CD8-positive, alpha-beta memory T cell (primary cell): ENCODE measurements at regions of chr19 and their contacts with region 1.

Region 1: GRCh38 chr19:45902651-45903625 is 525 bp upstream of the MYPOP start:
- DNase-seq: peak; percentile 99 to 100 (median 99)
- H3K4me3 ChIP-seq: peak overlapping the region; percentile 74
- H3K4me3 Mint-ChIP-seq: peak overlapping the region; percentile 94 to 100 (median 97)
- H3K27ac ChIP-seq: peak overlapping the region; percentile 68
- H3K27ac Mint-ChIP-seq: peak overlapping the region; percentile 82 to 96 (median 89)
- H3K4me1 ChIP-seq: peaks cover 16% of the 10 kb centered on the region
- H3K4me1 Mint-ChIP-seq: peaks cover 17 to 25% (median 19%) of the 10 kb centered on the region in 3 donors
- H3K27me3 ChIP-seq: no peaks in the 10 kb centered on the region
- H3K27me3 Mint-ChIP-seq: peaks cover 0 to 5% of the 10 kb centered on the region in 2 donors

Region 2: DNA sequence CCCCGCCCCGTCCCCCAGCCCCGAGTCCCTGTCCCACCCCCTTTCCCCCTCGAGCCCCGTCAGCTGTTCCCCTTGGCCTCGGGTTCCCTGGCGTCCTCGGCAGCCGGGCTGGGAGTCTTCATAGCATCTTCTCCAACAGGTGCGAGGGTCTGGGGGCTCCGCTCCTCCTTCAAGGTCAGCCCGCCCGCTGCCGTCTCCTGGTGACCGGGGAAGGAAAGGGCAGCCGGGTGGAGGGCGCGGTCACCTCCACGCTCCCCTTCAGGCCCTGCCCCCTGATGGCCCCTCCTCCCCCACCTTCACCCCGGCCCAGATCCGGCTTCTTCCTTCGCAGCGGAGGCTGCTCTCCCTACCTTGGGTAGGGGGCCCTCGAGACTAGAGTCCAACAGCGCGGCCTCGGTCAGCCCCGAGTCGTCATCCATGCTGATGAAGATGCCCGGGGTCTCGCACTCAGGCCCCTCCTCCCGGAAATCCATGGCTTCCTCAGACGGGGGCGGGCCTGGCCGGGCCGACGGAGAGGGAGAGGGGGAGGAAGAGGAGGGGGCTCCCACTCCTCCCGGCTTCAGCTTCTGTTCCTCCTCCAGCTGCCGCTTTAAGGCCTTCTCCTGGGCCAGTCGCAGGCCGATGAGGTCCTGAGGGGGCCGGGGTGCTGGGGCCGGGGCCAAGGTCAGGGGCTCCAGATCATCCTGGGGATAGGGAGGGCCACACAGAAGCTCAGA is 87.3 kb before region 1 on chr19:
- CTCF ChIA-PET with region 1: no interaction called
- POLR2A ChIA-PET with region 1: no interaction called
- DNase-seq: no peak
- H3K4me3 ChIP-seq: no peak overlapping the region
- H3K4me3 Mint-ChIP-seq: peak overlapping the region in 1 of 7 donors; percentile 19
- H3K27ac ChIP-seq: no peak overlapping the region
- H3K27ac Mint-ChIP-seq: no peak overlapping the region
- H3K4me1 ChIP-seq: peaks cover 4% of the 10 kb centered on the region
- H3K4me1 Mint-ChIP-seq: peaks cover 3 to 5% (median 3%) of the 10 kb centered on the region in 3 donors
- H3K27me3 ChIP-seq: no peaks in the 10 kb centered on the region
- H3K27me3 Mint-ChIP-seq: peaks cover 0 to 5% of the 10 kb centered on the region in 2 donors

Region 3: GRCh38 chr19:45862564-45863334 is 40.2 kb before region 1 on chr19 and contains the start of gene SYMPK:
- CTCF ChIA-PET with region 1: interaction called, 20 read pairs
- POLR2A ChIA-PET with region 1: interaction called, 11 read pairs
- DNase-seq: peak; percentile 98 to 99 (median 98)
- H3K4me3 ChIP-seq: peak within 1 kb of the TSS; percentile 88
- H3K4me3 Mint-ChIP-seq: peak within 1 kb of the TSS; percentile 88 to 96 (median 92)
- H3K27ac ChIP-seq: peak within 1 kb of the TSS; percentile 82
- H3K27ac Mint-ChIP-seq: peak within 1 kb of the TSS; percentile 84 to 99 (median 93)
- H3K4me1 ChIP-seq: peaks cover 16% of the 10 kb centered on the region
- H3K4me1 Mint-ChIP-seq: peaks cover 27 to 41% (median 28%) of the 10 kb centered on the region in 3 donors
- H3K27me3 ChIP-seq: peaks cover 4% of the 10 kb centered on the region
- H3K27me3 Mint-ChIP-seq: peaks cover 12 to 18% of the 10 kb centered on the region in 2 donors
- total RNA-seq, gene SYMPK: 116 to 119 TPM

Region 4: DNA sequence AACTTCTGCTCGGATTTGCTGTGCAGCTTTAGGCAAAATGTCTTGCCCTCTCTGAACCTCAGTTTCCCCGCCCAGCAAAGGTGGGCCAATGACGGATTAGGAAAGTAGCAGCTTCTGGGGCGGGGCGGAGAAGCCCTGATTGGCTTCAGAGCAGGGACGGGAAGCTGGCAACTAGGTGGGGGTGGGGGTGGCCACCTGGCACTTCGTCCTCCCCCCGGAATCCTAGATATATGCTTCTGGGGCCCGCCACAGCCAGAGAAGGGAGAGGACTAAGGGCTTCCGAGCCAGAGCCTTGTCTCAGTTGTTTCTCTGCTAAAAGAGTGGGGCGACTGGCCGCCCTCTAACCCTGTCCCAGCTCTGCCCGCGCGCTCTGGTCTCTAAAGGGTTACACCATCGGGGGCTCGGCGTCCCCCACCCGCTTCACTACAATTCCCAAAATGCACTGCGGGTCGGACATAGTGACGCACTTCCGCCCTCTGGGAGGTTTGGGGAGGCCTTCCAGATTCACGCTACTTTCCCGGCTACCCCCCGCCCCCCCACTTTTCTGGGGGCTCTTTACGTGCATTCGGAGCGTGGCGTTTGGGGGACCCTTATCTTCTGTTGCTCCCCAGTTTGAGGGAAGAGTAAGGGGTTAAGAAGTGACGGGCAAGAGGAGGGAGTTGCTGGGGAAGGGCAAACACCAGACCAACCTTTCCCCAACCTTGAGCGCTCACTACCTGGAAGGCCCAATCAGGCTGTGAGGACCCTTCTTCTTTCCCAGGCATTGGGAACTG is 16.3 kb before region 1 on chr19:
- CTCF ChIA-PET with region 1: interaction called, 16 read pairs
- POLR2A ChIA-PET with region 1: interaction called, 19 read pairs
- DNase-seq: peak; percentile 81 to 92 (median 90)
- H3K4me3 ChIP-seq: peak overlapping the region; percentile 92
- H3K4me3 Mint-ChIP-seq: peak overlapping the region; percentile 92 to 99 (median 96)
- H3K27ac ChIP-seq: peak overlapping the region; percentile 83
- H3K27ac Mint-ChIP-seq: peak overlapping the region; percentile 92 to 99 (median 99)
- H3K4me1 ChIP-seq: peaks cover 34% of the 10 kb centered on the region
- H3K4me1 Mint-ChIP-seq: peaks cover 16 to 36% (median 22%) of the 10 kb centered on the region in 3 donors
- H3K27me3 ChIP-seq: no peaks in the 10 kb centered on the region
- H3K27me3 Mint-ChIP-seq: peaks cover 0 to 3% of the 10 kb centered on the region in 2 donors

Region 5: GRCh38 chr19:45931055-45931454 is 28.1 kb after region 1 on chr19:
- CTCF ChIA-PET with region 1: no interaction called
- POLR2A ChIA-PET with region 1: no interaction called
- DNase-seq: no peak
- H3K4me3 ChIP-seq: no peak overlapping the region
- H3K4me3 Mint-ChIP-seq: peak overlapping the region in 1 of 7 donors; percentile 10
- H3K27ac ChIP-seq: no peak overlapping the region
- H3K27ac Mint-ChIP-seq: peak overlapping the region in 1 of 8 donors; percentile 49
- H3K4me1 ChIP-seq: peaks cover 9% of the 10 kb centered on the region
- H3K4me1 Mint-ChIP-seq: peaks cover 5 to 11% (median 10%) of the 10 kb centered on the region in 3 donors
- H3K27me3 ChIP-seq: peaks cover 9% of the 10 kb centered on the region
- H3K27me3 Mint-ChIP-seq: peaks cover 12 to 39% of the 10 kb centered on the region in 2 donors

Region 6: DNA sequence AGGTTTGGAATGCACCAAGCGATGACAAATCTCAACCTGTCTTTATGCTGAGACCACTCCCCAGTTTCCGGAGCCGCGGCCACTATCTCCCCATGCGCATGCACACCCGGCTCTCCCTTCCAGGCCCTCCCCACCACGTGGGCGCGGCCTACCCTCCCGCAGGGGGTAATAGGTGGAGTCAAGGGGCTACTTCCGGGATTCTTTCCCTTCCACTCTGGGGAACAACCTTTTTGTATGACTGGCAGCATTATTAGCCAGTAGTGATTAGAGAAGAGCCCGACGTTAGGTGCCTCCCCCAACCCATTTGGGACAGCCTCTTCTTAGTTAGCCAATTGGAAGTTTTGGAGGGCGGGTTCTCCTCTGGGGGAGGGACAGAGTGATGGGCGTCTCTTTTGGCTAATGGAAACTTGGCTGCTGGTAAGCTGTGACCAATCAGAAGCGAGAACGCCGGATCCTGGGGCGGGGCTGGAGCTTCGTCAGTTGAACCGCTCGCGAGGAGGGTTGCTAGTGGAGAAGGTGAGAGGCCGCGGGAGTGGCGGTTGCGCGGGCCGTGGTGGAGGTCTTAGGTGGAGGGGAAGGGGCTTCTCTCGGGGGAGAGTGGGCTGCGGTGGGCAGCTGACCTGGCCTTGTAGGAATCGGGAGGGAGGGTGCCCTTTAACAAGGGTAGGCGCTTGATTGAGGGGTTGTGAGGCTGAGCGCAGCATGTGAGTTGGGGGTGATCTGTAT is 92.2 kb after region 1 on chr19 and contains the start of gene CCDC61:
- CTCF ChIA-PET with region 1: interaction called, 3 read pairs
- POLR2A ChIA-PET with region 1: interaction called, 10 read pairs
- DNase-seq: peak; percentile 92 to 99 (median 97)
- H3K4me3 ChIP-seq: peak within 1 kb of the TSS; percentile 89
- H3K4me3 Mint-ChIP-seq: no peak within 1 kb of the TSS
- H3K27ac ChIP-seq: peak within 1 kb of the TSS; percentile 53
- H3K27ac Mint-ChIP-seq: peak within 1 kb of the TSS in 2 of 8 donors; percentile 53 to 72
- H3K4me1 ChIP-seq: peaks cover 17% of the 10 kb centered on the region
- H3K4me1 Mint-ChIP-seq: peaks cover 15 to 20% (median 20%) of the 10 kb centered on the region in 3 donors
- H3K27me3 ChIP-seq: no peaks in the 10 kb centered on the region
- H3K27me3 Mint-ChIP-seq: peaks cover 7 to 11% of the 10 kb centered on the region in 2 donors
- total RNA-seq, gene CCDC61: 20.0 to 23.3 TPM